A673 (cell line): ENCODE measurements at regions of chr5 and their contacts with region 1.

Region 1: DNA sequence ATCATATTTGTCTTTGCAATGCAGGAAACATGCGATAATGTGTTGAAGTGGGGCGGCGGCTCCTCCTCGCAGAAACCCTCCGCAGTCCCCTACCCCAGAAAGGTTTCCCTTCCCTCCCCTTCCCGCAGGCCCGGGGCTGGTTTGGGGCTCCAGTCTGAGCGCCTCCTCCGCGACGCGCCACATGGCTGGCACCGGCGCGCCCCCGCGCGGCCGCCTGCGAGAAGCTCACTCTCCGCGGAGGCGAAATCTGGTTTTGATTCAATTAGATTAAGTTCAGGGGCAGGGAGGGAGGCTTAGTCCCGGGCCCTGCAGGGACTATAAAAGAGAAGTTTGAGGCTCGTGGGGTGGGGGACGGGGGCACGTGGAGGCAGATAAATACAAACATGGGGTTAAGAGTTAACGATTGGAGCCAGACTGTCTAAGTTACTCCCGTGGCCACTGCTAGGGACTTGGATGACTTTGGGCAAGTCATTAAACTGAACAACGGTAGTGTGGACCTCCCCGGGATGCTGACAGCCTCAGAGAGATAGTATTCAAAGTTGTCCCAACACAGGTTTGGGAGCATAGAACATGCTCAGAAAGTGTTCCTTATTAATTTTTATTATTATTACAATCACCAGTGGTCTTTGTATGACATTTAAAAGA is 69.4 kb downstream of the MSX2 start:
- DNase-seq: peak; percentile 73
- H3K4me3 ChIP-seq: no peak overlapping the region
- H3K27ac ChIP-seq: no peak overlapping the region
- H3K4me1 ChIP-seq: no peaks in the 10 kb centered on the region
- H3K27me3 ChIP-seq: peaks cover 21% of the 10 kb centered on the region
- CTCF ChIP-seq: peak; percentile 92

Region 2: GRCh38 chr5:174571662-174572397 is 222.0 kb before region 1 on chr5:
- CTCF ChIA-PET with region 1: no interaction called
- POLR2A ChIA-PET with region 1: no interaction called
- intact Hi-C with region 1: loop called (anchors 10 kb)
- DNase-seq: peak; percentile 86
- H3K4me3 ChIP-seq: no peak overlapping the region
- H3K27ac ChIP-seq: no peak overlapping the region
- H3K4me1 ChIP-seq: peaks cover 6% of the 10 kb centered on the region
- H3K27me3 ChIP-seq: no peaks in the 10 kb centered on the region
- CTCF ChIP-seq: 0 out of 2 replicates have a peak, but pooled peaks have one; percentile 17

Region 3: DNA sequence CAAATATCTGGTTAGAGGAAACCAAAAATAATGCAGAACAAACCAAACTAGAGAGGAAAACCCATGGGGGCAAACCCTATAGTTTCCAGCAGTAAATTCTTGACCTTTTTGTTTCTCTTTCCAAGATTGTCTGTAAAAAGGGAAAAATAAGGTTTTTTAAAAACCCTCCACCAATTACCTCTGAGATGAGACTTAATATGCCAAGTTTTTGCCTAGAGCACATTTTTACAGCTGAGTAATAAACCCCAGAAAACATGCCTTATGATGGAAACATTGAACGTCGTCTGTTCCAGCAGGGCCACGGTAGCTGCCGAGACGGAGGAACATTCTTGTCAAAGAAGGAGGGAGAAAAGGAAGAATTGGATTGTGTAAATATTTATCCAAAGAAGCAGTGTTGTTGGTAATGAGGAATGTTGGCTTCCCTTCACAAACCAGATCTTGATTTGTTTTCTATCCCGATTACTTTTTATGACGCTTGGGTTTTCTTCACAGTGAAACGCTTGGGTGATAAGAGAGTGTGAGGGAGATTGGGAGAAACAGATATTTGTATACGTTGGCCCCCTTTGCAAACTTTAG is 86.7 kb before region 1 on chr5:
- CTCF ChIA-PET with region 1: no interaction called
- POLR2A ChIA-PET with region 1: no interaction called
- intact Hi-C with region 1: no loop called
- DNase-seq: no peak
- H3K4me3 ChIP-seq: no peak overlapping the region
- H3K27ac ChIP-seq: no peak overlapping the region
- H3K4me1 ChIP-seq: no peaks in the 10 kb centered on the region
- H3K27me3 ChIP-seq: peaks cover 27% of the 10 kb centered on the region
- CTCF ChIP-seq: no peak

Region 4: DNA sequence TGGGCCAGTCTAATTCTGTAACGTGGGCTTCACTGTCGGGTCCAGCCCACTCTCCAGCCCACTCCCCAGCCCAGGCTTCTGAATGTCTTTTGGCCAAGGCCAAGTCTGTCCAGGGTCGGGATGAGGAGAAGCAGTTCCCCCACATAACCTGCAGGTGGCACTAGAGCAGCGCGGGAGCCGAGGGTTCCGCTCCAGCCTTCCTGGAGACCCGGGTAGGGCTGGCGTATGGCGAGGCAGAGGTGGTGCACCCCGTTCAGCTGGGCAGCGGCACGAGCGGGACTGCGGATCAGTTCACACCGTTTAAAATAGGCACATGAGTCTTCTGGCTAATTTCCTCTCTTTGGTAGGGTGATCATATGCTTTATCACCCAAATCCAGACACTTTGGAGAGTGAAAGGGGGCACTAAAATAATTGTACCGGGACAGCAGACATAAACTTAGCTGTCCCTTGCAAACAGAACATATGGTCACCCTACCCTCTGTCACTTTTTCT is 116.5 kb after region 1 on chr5:
- CTCF ChIA-PET with region 1: no interaction called
- POLR2A ChIA-PET with region 1: no interaction called
- intact Hi-C with region 1: no loop called
- DNase-seq: peak; percentile 54
- H3K4me3 ChIP-seq: no peak overlapping the region
- H3K27ac ChIP-seq: no peak overlapping the region
- H3K4me1 ChIP-seq: no peaks in the 10 kb centered on the region
- H3K27me3 ChIP-seq: peaks cover 9% of the 10 kb centered on the region
- CTCF ChIP-seq: peak; percentile 78

Region 5: GRCh38 chr5:175025077-175025476 is 231.3 kb after region 1 on chr5:
- CTCF ChIA-PET with region 1: no interaction called
- POLR2A ChIA-PET with region 1: no interaction called
- intact Hi-C with region 1: no loop called
- DNase-seq: no peak
- H3K4me3 ChIP-seq: no peak overlapping the region
- H3K27ac ChIP-seq: no peak overlapping the region
- H3K4me1 ChIP-seq: no peaks in the 10 kb centered on the region
- H3K27me3 ChIP-seq: no peaks in the 10 kb centered on the region
- CTCF ChIP-seq: no peak